ENCODE measurements at regions of chr4 and their contacts with region 1.

Region 1: GRCh38 chr4:165096776-165097175 is 15.9 kb downstream of the TMEM192 start:
- DNase-seq: no peak
- ATAC-seq: peak; percentile 63; the same call in 1 of the 2 replicates
- H3K4me3 ChIP-seq: no peak overlapping the region
- H3K27ac ChIP-seq: no peak overlapping the region
- H3K4me1 ChIP-seq: no peaks in the 10 kb centered on the region
- H3K27me3 ChIP-seq: no peaks in the 10 kb centered on the region
- CTCF ChIP-seq: peak; percentile 22 to 58 (median 54); a peak in 5 of 6 replicates
- POLR2A ChIP-seq: no peak
- RAD21 ChIP-seq: peak; percentile 61

Region 2: GRCh38 chr4:164408831-164409230 is 687.9 kb before region 1 on chr4:
- CTCF ChIA-PET with region 1: no interaction called
- POLR2A ChIA-PET with region 1: no interaction called
- RAD21 ChIA-PET with region 1: no interaction called
- intact Hi-C with region 1: no loop called
- DNase-seq: no peak
- ATAC-seq: no peak
- H3K4me3 ChIP-seq: no peak overlapping the region
- H3K27ac ChIP-seq: no peak overlapping the region
- H3K4me1 ChIP-seq: no peaks in the 10 kb centered on the region
- H3K27me3 ChIP-seq: no peaks in the 10 kb centered on the region
- CTCF ChIP-seq: no peak
- POLR2A ChIP-seq: no peak
- RAD21 ChIP-seq: no peak

Region 3: GRCh38 chr4:164768516-164768915 is 328.3 kb before region 1 on chr4:
- CTCF ChIA-PET with region 1: interaction called, 21 read pairs
- POLR2A ChIA-PET with region 1: no interaction called
- RAD21 ChIA-PET with region 1: interaction called in 1 of 2 experiments, 3 read pairs
- intact Hi-C with region 1: loop called (anchors 2 kb)
- DNase-seq: peak; percentile 6
- ATAC-seq: peak; percentile 79
- H3K4me3 ChIP-seq: no peak overlapping the region
- H3K27ac ChIP-seq: no peak overlapping the region
- H3K4me1 ChIP-seq: no peaks in the 10 kb centered on the region
- H3K27me3 ChIP-seq: no peaks in the 10 kb centered on the region
- CTCF ChIP-seq: peak; percentile 39 to 61 (median 48); a peak in 5 of 6 replicates
- POLR2A ChIP-seq: no peak
- RAD21 ChIP-seq: peak; percentile 39

Region 4: DNA sequence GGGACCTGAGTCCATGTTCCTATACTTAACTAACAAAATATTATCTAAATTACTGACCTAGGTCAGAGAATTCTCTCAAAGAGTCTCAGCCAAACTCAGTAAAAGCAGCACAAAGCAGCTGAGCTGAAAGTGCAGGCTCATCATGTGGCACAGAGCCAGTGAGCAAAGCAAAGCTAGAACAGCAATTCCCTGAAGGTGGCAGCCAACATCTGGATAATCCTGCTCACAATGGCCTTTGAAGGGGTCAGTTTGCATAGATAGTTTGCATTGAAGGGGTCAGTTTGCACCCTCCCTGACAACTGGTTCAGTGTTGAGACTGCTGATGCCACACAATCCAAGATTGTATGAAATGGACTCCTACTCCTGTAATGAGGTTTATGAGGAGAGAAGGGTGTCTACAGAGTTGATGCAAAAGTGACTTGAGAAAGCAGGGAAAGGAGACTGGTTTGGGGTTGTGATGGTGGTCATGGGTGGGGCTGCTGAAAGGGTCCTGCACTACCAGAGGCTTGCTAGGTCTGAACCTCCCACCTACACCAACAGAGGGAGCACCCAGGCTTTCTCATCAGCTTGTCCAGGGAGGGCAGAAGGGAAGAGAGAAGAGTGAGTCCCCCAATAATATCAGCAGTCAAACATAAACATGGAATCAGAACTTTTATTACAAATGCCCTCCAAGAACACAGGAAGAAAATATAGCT is 159.1 kb before region 1 on chr4:
- CTCF ChIA-PET with region 1: interaction called, 6 read pairs
- POLR2A ChIA-PET with region 1: no interaction called
- RAD21 ChIA-PET with region 1: no interaction called
- intact Hi-C with region 1: loop called (anchors 10 kb)
- DNase-seq: no peak
- ATAC-seq: peak; percentile 80
- H3K4me3 ChIP-seq: no peak overlapping the region
- H3K27ac ChIP-seq: no peak overlapping the region
- H3K4me1 ChIP-seq: no peaks in the 10 kb centered on the region
- H3K27me3 ChIP-seq: no peaks in the 10 kb centered on the region
- CTCF ChIP-seq: peak in 2 of 3 experiments; percentile 47 to 48; a peak in 4 of 6 replicates
- POLR2A ChIP-seq: no peak
- RAD21 ChIP-seq: no peak

Region 5: DNA sequence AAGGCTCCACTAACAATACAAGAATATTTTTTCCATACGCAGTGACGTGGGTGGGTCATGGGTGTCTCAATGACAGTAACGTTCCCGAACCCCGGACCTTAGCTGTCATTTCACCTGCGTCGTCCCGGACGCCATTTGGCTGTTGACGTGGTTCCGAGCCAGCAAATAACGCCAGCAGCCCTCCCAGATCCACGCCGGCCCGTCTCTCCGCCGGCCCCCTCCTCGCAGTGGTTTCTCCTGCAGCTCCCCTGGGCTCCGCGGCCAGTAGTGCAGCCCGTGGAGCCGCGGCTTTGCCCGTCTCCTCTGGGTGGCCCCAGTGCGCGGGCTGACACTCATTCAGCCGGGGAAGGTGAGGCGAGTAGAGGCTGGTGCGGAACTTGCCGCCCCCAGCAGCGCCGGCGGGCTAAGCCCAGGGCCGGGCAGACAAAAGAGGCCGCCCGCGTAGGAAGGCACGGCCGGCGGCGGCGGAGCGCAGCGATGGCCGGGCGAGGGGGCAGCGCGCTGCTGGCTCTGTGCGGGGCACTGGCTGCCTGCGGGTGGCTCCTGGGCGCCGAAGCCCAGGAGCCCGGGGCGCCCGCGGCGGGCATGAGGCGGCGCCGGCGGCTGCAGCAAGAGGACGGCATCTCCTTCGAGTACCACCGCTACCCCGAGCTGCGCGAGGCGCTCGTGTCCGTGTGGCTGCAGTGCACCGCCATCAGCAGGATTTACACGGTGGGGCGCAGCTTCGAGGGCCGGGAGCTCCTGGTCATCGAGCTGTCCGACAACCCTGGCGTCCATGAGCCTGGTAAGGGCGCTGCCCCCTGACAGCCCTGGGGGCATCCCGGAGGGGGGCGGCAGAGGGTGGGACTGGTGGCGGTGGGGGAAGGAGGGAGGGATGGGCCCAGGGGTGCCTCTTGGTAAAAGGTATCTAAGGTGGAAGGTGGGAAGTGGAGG is 282.2 kb after region 1 on chr4 and contains the start of gene CPE:
- CTCF ChIA-PET with region 1: no interaction called
- POLR2A ChIA-PET with region 1: no interaction called
- RAD21 ChIA-PET with region 1: no interaction called
- intact Hi-C with region 1: no loop called
- DNase-seq: peak; percentile 57
- ATAC-seq: peak; percentile 98
- H3K4me3 ChIP-seq: peak within 1 kb of the TSS; percentile 47 to 67
- H3K27ac ChIP-seq: peak within 1 kb of the TSS; percentile 54; the same call in 1 of the 2 replicates
- H3K4me1 ChIP-seq: peaks cover 10 to 25% of the 10 kb centered on the region in 2 experiments
- H3K27me3 ChIP-seq: no peaks in the 10 kb centered on the region
- CTCF ChIP-seq: peak; percentile 12 to 47 (median 39); a peak in 4 of 6 replicates
- POLR2A ChIP-seq: peak; percentile 35
- RAD21 ChIP-seq: peak; percentile 39
- total RNA-seq, gene CPE: 29.3 TPM

Measured in HCT116 (cell line).